CD4-positive, alpha-beta T cell (primary cell): ENCODE measurements at regions of chrX and their contacts with region 1.

Region 1: DNA sequence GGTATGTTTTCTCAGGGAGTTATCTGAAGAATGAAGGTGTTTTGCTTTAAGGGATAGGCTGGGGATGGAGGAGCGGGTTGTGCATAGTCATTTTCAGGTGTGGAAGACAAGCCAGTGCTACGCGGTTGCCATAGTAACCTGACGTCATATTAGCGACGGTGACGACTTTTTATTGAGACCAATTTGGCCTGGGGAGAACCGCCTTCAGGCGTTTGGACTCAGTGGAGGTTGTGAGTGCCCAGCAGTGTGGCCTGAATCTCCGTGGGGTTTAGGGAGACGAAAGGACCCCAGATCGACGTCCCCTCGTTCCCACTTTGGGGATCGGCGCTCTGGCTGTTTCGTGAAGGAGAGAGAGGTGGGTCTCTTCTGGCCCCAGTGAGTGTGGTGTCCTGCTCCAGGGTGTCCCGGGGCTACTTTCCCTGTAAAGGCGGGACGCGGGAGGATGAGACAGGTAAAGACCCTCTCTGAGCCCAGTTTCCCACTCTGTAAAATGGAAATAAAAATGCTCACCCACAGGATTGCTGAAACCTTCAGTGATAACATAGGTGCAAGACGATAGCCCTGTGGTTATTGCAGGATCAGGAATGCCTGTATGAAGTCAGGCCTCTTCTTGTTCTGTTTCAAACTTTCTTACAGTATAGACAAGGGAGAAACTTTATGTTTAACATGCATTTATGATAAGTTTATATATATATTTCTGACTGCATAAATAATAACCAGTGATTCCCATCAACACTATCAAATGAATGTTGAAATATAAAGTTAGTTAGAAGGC is 48.6 kb downstream of the GPRASP3 start:
- DNase-seq: peak; percentile 55 to 91 (median 68)
- ATAC-seq: peak; percentile 87
- H3K4me3 ChIP-seq: peak overlapping the region; percentile 80
- H3K4me3 Mint-ChIP-seq: peak overlapping the region; percentile 98
- H3K27ac ChIP-seq: peak overlapping the region; percentile 15 to 47
- H3K27ac Mint-ChIP-seq: peak overlapping the region; percentile 91
- H3K4me1 ChIP-seq: peaks cover 4% of the 10 kb centered on the region
- H3K4me1 Mint-ChIP-seq: peaks cover 19% of the 10 kb centered on the region
- H3K27me3 ChIP-seq: no peaks in the 10 kb centered on the region
- H3K27me3 Mint-ChIP-seq: no peaks in the 10 kb centered on the region
- CTCF ChIP-seq: no peak

Region 2: DNA sequence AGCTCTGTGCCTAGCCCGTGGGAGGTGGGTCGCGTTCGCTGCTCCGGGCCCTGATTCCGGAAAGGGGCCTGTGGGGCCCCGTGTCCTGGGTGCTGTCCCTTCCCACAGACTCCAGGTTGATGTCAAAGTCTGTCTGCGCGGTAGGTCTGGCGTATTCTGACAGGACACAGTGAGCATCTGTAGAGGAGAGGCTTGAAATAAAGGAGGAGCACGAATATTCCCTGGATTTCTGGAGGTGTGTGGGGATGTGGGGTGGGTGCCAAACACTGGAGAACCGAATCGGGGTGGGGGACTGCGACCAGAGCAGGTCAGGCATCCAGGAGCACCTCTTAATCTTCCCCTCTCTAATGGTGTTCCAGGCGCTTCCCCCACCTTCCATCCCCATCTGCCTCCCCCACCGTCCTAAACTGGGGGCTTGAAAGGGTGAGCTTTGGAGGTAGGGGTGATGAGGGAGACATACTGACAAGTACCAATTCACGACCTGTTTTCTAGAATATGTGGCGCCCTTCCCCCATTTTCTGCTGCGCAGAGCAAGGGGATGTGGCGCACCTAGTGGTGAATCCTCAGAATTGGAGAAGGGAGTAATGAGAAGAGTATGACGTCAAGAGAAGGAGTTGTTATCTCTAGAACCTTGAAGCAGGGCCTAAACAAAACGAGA is 117.0 kb before region 1 on chrX:
- CTCF ChIA-PET with region 1: no interaction called
- POLR2A ChIA-PET with region 1: no interaction called
- intact Hi-C with region 1: loop called in 1 of 2 experiments (anchors 5 kb)
- DNase-seq: peak; percentile 34 to 84 (median 56)
- ATAC-seq: peak; percentile 75
- H3K4me3 ChIP-seq: peak overlapping the region; percentile 84
- H3K4me3 Mint-ChIP-seq: peak overlapping the region; percentile 96
- H3K27ac ChIP-seq: peak overlapping the region; percentile 40 to 64
- H3K27ac Mint-ChIP-seq: peak overlapping the region; percentile 97
- H3K4me1 ChIP-seq: peaks cover 18% of the 10 kb centered on the region
- H3K4me1 Mint-ChIP-seq: peaks cover 45% of the 10 kb centered on the region
- H3K27me3 ChIP-seq: no peaks in the 10 kb centered on the region
- H3K27me3 Mint-ChIP-seq: no peaks in the 10 kb centered on the region
- CTCF ChIP-seq: peak; percentile 54

Region 3: GRCh38 chrX:102784550-102784949 is 15.4 kb after region 1 on chrX:
- CTCF ChIA-PET with region 1: no interaction called
- POLR2A ChIA-PET with region 1: no interaction called
- intact Hi-C with region 1: no loop called
- DNase-seq: no peak
- ATAC-seq: no peak
- H3K4me3 ChIP-seq: no peak overlapping the region
- H3K4me3 Mint-ChIP-seq: no peak overlapping the region
- H3K27ac ChIP-seq: no peak overlapping the region
- H3K27ac Mint-ChIP-seq: no peak overlapping the region
- H3K4me1 ChIP-seq: no peaks in the 10 kb centered on the region
- H3K4me1 Mint-ChIP-seq: no peaks in the 10 kb centered on the region
- H3K27me3 ChIP-seq: no peaks in the 10 kb centered on the region
- H3K27me3 Mint-ChIP-seq: no peaks in the 10 kb centered on the region
- CTCF ChIP-seq: no peak